Lower leg skin (tissue), 4 donors: ENCODE measurements at regions of chr3 and their contacts with region 1.

Region 1: GRCh38 chr3:35814531-35814930 is 175.2 kb downstream of the ARPP21 start:
- DNase-seq: no peak
- H3K4me3 ChIP-seq: no peak overlapping the region
- CTCF ChIP-seq: no peak
- POLR2A ChIP-seq: no peak

Region 2: DNA sequence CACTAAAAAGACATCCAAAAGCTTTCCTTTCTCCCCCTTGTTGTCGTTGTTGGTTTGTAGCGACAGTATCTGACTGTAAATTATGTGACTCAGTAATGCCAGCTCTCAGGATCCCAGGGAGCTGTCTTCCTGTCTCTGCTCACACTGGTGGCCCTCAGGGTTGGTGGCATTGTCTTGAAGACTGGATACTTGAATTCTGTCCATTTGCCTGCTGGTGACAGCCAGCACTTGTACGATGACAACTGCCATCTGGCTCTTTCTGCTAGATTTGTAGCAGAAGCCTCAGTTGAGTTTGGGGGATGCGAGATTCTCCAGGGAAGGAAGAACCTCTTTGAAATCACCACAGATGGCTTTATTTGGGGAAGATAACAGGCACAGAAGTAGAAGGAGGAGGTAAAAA is 54.4 kb before region 1 on chr3:
- intact Hi-C with region 1: loop called (anchors 2 kb)
- DNase-seq: no peak
- H3K4me3 ChIP-seq: no peak overlapping the region
- CTCF ChIP-seq: no peak
- POLR2A ChIP-seq: no peak